Panc1 (cell line): ENCODE measurements at regions of chr4 and their contacts with region 1.

Region 1: DNA sequence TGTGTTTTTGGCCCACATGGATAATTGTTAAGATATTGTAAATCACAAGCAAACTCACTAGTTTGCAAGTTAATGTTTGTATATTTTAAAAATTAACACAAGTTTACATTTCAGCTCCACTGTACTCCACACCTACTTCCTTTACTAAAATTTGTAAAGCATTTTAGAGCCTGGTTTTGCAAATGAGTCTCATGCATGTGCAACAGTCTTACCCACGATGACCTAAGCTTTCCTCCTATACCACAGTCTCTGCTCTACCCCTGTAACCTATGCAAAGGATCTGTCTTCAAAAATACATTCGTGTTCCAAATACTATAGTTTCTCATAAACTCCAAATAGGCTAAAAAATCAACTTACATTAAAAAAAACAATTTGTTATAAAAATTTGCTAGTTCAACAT is 10.2 kb downstream of the BDH2 start:
- DNase-seq: no peak
- ATAC-seq: no peak
- H3K4me3 ChIP-seq: no peak overlapping the region
- H3K27ac ChIP-seq: no peak overlapping the region
- H3K4me1 ChIP-seq: no peaks in the 10 kb centered on the region
- H3K27me3 ChIP-seq: no peaks in the 10 kb centered on the region
- CTCF ChIP-seq: no peak

Region 2: GRCh38 chr4:102815981-102816380 is 273.5 kb before region 1 on chr4:
- CTCF ChIA-PET with region 1: no interaction called
- POLR2A ChIA-PET with region 1: no interaction called
- in situ Hi-C with region 1: no loop called
- intact Hi-C with region 1: loop called (anchors 10 kb)
- DNase-seq: peak; percentile 55
- ATAC-seq: no peak
- H3K4me3 ChIP-seq: no peak overlapping the region
- H3K27ac ChIP-seq: no peak overlapping the region
- H3K4me1 ChIP-seq: peaks cover 41% of the 10 kb centered on the region
- H3K27me3 ChIP-seq: no peaks in the 10 kb centered on the region
- CTCF ChIP-seq: no peak

Region 3: DNA sequence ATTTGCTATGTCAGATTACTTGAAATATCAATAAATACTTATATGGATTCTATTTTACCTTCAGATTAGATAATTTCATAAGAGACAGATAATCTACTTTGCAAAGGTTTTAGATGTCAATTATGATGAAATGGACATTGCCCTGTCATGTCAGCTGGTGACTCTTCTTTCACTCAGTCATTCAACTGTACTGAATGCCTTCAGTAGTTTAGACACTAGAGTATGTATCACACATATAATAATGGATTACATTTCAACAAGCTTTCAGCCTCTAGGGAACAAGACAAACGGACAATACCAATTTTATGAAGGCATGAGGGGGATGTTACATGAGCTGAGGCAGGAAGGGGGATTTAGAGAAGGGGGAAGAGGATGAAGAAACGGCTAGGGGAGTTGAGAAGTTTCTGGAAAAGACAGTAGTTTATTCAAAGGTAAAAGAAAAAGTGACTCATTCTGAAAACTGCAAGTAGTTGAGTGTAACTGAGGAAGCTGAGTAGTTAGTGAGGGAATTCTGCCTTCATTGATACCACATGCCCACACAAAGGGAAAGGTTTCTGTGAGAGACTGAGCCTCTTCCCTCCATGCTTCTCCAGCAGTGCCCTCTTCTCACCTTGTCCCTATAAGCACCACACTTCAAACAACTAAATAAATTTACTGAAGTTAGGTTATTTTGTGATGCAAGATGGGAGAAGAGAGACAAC is 38.6 kb before region 1 on chr4:
- CTCF ChIA-PET with region 1: no interaction called
- POLR2A ChIA-PET with region 1: no interaction called
- in situ Hi-C with region 1: no loop called
- intact Hi-C with region 1: loop called (anchors 5 kb)
- DNase-seq: no peak
- ATAC-seq: no peak
- H3K4me3 ChIP-seq: no peak overlapping the region
- H3K27ac ChIP-seq: no peak overlapping the region
- H3K4me1 ChIP-seq: no peaks in the 10 kb centered on the region
- H3K27me3 ChIP-seq: no peaks in the 10 kb centered on the region
- CTCF ChIP-seq: no peak